HCT116 (cell line): ENCODE measurements at regions of chr11 and their contacts with region 1.

Region 1: GRCh38 chr11:111446404-111447111 is 65.6 kb downstream of the BTG4 start:
- DNase-seq: peak; percentile 85
- ATAC-seq: peak; percentile 99
- H3K4me3 ChIP-seq: no peak overlapping the region
- H3K27ac ChIP-seq: no peak overlapping the region
- H3K4me1 ChIP-seq: peaks cover 0 to 7% of the 10 kb centered on the region in 2 experiments; a peak in 2 of 4 replicates
- H3K27me3 ChIP-seq: no peaks in the 10 kb centered on the region
- CTCF ChIP-seq: peak; percentile 90 to 92 (median 91)
- POLR2A ChIP-seq: no peak
- RAD21 ChIP-seq: peak; percentile 97

Region 2: GRCh38 chr11:110463153-110463552 is 983.4 kb before region 1 on chr11:
- CTCF ChIA-PET with region 1: no interaction called
- POLR2A ChIA-PET with region 1: no interaction called
- RAD21 ChIA-PET with region 1: no interaction called
- intact Hi-C with region 1: loop called (anchors 1 kb)
- DNase-seq: no peak
- ATAC-seq: peak; percentile 97
- H3K4me3 ChIP-seq: no peak overlapping the region
- H3K27ac ChIP-seq: no peak overlapping the region
- H3K4me1 ChIP-seq: no peaks in the 10 kb centered on the region
- H3K27me3 ChIP-seq: no peaks in the 10 kb centered on the region
- CTCF ChIP-seq: peak; percentile 39 to 64 (median 53)
- POLR2A ChIP-seq: no peak
- RAD21 ChIP-seq: peak; percentile 72

Region 3: DNA sequence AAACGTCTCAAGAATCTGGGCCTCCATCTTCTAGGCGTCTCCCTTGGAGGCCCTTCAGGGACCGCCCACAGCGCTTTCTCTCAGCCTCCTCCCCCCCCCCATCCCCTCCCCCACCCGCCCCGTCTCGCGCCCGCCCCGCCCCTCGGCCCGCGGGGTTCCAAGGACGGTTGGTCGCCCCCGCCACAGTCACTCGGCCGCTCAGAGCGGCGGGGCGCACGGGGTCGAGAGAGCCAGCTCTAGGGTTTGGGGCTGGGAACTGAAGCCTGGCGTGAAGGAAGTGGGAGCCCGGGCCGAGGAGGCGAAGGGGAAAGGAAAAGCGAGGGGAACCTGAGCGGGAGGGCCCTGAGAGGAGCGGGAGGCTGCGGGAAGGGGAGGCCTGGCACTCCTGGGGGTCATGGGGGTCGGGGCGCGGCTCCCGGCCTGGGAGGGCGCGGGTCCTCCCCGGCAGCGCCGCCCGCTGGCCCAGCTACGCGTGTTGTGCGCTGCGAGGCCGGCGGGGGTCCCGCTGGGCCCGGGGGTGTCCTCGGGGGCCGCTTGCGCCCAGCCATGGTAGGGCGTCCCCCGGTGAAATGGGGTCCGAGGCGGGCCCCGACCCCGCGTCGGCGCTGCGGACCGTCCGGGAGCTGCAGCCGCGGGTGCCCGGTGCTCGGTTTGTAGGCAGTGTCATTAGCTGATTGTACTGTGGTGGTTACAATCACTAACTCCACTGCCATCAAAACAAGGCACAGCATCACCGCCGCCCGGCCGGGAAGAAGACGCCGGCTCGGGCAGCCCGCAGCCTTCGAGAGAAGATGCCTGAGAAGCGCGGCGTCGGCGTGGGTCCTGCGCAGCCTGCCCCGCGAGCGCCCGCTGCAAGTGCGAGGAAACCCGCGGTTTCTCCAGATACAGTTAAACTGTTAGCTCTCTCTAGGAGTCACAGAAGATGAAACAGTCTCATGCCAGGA is 66.0 kb after region 1 on chr11 and contains the start of gene BTG4:
- CTCF ChIA-PET with region 1: no interaction called
- POLR2A ChIA-PET with region 1: no interaction called
- RAD21 ChIA-PET with region 1: no interaction called
- intact Hi-C with region 1: no loop called
- DNase-seq: no peak
- ATAC-seq: no peak
- H3K4me3 ChIP-seq: no peak within 1 kb of the TSS
- H3K27ac ChIP-seq: no peak within 1 kb of the TSS
- H3K4me1 ChIP-seq: no peaks in the 10 kb centered on the region
- H3K27me3 ChIP-seq: no peaks in the 10 kb centered on the region
- CTCF ChIP-seq: no peak
- POLR2A ChIP-seq: no peak
- RAD21 ChIP-seq: no peak
- total RNA-seq, gene BTG4: not detected